Caco-2 (cell line): ENCODE measurements at regions of chr5 and their contacts with region 1.

Region 1: DNA sequence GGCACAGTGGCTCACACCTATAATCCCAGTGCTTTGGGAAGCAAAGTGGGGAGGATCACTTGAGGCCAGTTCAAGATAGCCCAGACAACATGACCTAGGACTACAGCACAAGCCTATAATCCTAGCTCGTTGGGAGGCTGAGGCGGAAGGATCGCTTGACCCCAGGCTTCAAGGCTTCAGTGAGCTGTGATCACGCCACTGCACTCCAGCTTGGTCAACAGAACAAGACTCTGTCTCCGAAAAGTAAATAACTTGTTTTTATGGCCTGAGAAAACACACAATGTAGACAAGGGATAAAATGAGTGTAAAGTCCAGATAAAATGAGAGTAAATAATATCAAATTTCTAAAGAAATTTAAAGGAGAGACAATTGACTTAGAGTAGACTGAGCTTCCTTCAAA is 26.3 kb downstream of the SHLD3 start:
- DNase-seq: peak; percentile 72 to 83
- H3K4me3 ChIP-seq: no peak overlapping the region
- H3K4me3 Mint-ChIP-seq: peak overlapping the region; percentile 41
- H3K27ac Mint-ChIP-seq: peak overlapping the region; percentile 48
- H3K4me1 ChIP-seq: peaks cover 18% of the 10 kb centered on the region
- H3K4me1 Mint-ChIP-seq: peaks cover 17% of the 10 kb centered on the region
- H3K27me3 ChIP-seq: no peaks in the 10 kb centered on the region
- H3K27me3 Mint-ChIP-seq: no peaks in the 10 kb centered on the region
- CTCF ChIP-seq: no peak

Region 2: GRCh38 chr5:65611524-65611923 is 39.6 kb before region 1 on chr5:
- CTCF ChIA-PET with region 1: no interaction called
- POLR2A ChIA-PET with region 1: no interaction called
- intact Hi-C with region 1: loop called (anchors 1 kb)
- DNase-seq: peak; percentile 81 to 86
- H3K4me3 ChIP-seq: no peak overlapping the region
- H3K4me3 Mint-ChIP-seq: peak overlapping the region; percentile 49
- H3K27ac Mint-ChIP-seq: peak overlapping the region; percentile 56
- H3K4me1 ChIP-seq: peaks cover 34% of the 10 kb centered on the region
- H3K4me1 Mint-ChIP-seq: peaks cover 25% of the 10 kb centered on the region
- H3K27me3 ChIP-seq: no peaks in the 10 kb centered on the region
- H3K27me3 Mint-ChIP-seq: no peaks in the 10 kb centered on the region
- CTCF ChIP-seq: no peak

Region 3: GRCh38 chr5:65663804-65664521 is 12.8 kb after region 1 on chr5:
- CTCF ChIA-PET with region 1: interaction called, 3 read pairs
- POLR2A ChIA-PET with region 1: no interaction called
- intact Hi-C with region 1: loop called (anchors 2 kb)
- DNase-seq: peak in 1 of 2 experiments; percentile 38
- H3K4me3 ChIP-seq: no peak overlapping the region
- H3K4me3 Mint-ChIP-seq: no peak overlapping the region
- H3K27ac Mint-ChIP-seq: no peak overlapping the region
- H3K4me1 ChIP-seq: no peaks in the 10 kb centered on the region; the same call in 1 of the 2 replicates
- H3K4me1 Mint-ChIP-seq: peaks cover 8% of the 10 kb centered on the region
- H3K27me3 ChIP-seq: no peaks in the 10 kb centered on the region
- H3K27me3 Mint-ChIP-seq: no peaks in the 10 kb centered on the region
- CTCF ChIP-seq: peak; percentile 55 to 60

Region 4: GRCh38 chr5:65858316-65858715 is 207.2 kb after region 1 on chr5:
- CTCF ChIA-PET with region 1: no interaction called
- POLR2A ChIA-PET with region 1: no interaction called
- intact Hi-C with region 1: no loop called
- DNase-seq: no peak
- H3K4me3 ChIP-seq: no peak overlapping the region
- H3K4me3 Mint-ChIP-seq: no peak overlapping the region
- H3K27ac Mint-ChIP-seq: no peak overlapping the region
- H3K4me1 ChIP-seq: peaks cover 7% of the 10 kb centered on the region; the same call in 1 of the 2 replicates
- H3K4me1 Mint-ChIP-seq: peaks cover 7% of the 10 kb centered on the region
- H3K27me3 ChIP-seq: no peaks in the 10 kb centered on the region
- H3K27me3 Mint-ChIP-seq: no peaks in the 10 kb centered on the region
- CTCF ChIP-seq: no peak